ENCODE measurements at regions of chr5 and their contacts with region 1.

Region 1: DNA sequence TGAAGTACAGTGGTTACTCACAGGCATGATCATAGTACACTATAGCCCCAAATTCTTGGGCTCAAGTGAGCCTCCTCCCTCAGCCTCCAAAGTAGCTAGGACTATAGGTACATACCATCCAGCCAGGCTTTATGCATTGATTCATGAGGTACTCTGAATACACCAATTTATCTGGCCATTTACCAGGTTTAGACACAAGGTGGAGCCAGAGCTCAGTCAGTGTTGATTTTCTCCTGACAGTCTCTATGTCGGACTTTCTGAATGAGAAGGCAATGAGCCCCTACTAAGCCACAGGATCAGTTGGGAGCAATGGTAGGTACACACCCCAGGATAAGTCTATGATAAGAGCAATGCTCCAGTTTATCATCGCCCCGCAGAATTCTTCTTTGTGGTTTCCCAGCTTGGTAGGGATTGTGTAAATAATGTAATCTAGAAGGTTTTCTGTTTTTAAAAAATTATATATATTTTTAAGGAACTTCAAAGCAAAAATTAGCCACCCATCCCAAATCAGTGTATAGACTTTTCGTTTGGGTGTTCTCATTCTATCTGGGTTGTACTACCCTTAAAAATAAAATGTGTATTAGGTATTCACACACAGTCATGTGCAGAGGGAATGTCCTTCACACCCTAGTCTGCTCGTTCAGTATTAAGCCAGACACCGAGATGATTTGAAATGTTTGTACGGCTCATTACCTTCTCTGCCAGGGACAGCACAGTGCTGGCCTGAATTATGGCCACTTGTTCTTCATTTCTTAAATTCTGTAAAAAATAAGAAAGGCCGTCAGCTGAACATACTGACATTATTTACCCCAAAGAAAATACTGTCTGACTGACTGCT is 118.4 kb upstream of the DPYSL3 start:
- DNase-seq: peak; percentile 68 to 77
- H3K4me3 ChIP-seq: no peak overlapping the region
- H3K4me1 ChIP-seq: no peaks in the 10 kb centered on the region
- H3K27me3 ChIP-seq: peaks cover 6% of the 10 kb centered on the region

Region 2: GRCh38 chr5:147822686-147823491 is 194.6 kb after region 1 on chr5:
- in situ Hi-C with region 1: loop called (anchors 10 kb)
- DNase-seq: peak; percentile 44 to 57
- H3K4me3 ChIP-seq: no peak overlapping the region
- H3K4me1 ChIP-seq: no peaks in the 10 kb centered on the region
- H3K27me3 ChIP-seq: no peaks in the 10 kb centered on the region